Adrenal gland (tissue), 19 donors: ENCODE measurements at regions of chr6 and their contacts with region 1.

Region 1: DNA sequence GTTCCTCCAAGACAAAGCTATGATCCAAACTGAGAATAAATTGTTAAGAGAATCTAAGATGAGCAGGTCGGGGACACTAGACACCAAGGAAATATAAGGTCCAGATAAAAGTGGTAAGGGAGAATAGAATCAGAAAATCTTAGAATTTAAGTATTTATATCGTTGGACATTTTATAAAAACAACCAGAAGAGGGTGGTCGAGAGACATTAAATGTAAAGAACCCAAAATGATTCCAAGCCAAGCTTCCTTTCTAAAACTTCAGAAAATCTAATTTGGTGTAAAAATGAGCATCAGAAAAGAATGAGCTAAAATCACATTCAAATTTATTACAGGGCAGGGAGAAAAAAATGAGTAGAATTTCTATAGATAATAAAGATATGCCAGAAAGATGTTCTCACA is 97.8 kb upstream of the OGFRL1 start:
- DNase-seq: no peak
- H3K4me3 ChIP-seq: no peak overlapping the region
- H3K27ac ChIP-seq: no peak overlapping the region
- H3K4me1 ChIP-seq: no peaks in the 10 kb centered on the region
- H3K27me3 ChIP-seq: no peaks in the 10 kb centered on the region
- CTCF ChIP-seq: peak in 5 of 6 experiments; percentile 28 to 59 (median 47)
- POLR2A ChIP-seq: no peak

Region 2: DNA sequence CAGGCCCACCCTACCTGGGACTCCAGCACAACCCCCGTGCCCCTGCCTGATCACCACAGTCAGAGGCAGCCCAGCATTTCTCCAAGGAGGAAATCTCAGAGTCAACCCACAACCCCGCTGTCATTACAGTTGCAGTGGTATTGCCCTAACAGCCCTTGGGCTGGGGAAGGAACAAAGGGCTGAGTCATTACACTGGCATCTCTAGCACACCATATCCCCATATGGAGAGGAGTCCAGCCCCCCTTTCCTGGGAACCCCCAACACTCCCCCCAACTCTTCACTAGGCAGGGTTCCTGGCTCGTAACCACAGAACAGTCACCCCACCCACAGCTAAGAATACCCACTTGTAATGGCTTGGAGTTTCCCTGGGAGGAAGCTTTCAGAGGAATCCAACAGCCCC is 51.6 kb before region 1 on chr6:
- intact Hi-C with region 1: no loop called
- DNase-seq: no peak
- H3K4me3 ChIP-seq: no peak overlapping the region
- H3K27ac ChIP-seq: no peak overlapping the region
- H3K4me1 ChIP-seq: no peaks in the 10 kb centered on the region
- H3K27me3 ChIP-seq: no peaks in the 10 kb centered on the region
- CTCF ChIP-seq: no peak
- POLR2A ChIP-seq: no peak

Region 3: DNA sequence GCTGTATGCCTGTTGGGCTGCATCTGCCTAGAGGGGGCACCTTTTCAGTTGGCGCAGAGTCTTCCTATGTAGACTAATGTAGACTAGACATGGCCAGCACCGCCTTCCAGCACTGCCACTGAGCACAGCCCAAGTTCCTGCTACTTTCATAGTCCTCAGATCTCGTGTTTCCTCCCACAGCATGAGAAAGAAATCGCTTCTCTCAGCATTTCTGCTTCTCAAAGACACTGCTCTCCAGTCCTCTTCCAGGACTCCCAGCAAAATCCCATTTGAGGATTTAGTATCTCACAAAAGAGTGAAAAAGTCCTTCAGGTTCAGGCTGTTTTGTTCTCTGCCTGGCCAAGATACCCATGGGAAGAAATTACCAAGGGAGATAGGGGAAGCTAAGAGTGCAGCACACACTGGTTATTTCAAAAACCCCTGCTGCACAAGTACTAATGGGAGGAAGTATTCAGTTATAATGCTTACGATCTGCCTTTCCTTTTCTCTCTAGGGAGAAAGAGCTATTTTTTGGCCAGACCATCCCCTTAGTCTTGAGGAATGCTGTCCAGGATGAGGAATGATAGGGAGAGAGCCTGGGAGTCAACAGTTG is 133.5 kb after region 1 on chr6:
- intact Hi-C with region 1: no loop called
- DNase-seq: no peak
- H3K4me3 ChIP-seq: no peak overlapping the region
- H3K27ac ChIP-seq: no peak overlapping the region
- H3K4me1 ChIP-seq: no peaks in the 10 kb centered on the region
- H3K27me3 ChIP-seq: no peaks in the 10 kb centered on the region
- CTCF ChIP-seq: no peak
- POLR2A ChIP-seq: no peak

Region 4: GRCh38 chr6:71349395-71349794 is 158.6 kb after region 1 on chr6:
- intact Hi-C with region 1: loop called (anchors 5 to 10 kb)
- DNase-seq: no peak
- H3K4me3 ChIP-seq: no peak overlapping the region
- H3K27ac ChIP-seq: no peak overlapping the region
- H3K4me1 ChIP-seq: peaks cover 0 to 9% of the 10 kb centered on the region in 2 donors
- H3K27me3 ChIP-seq: no peaks in the 10 kb centered on the region
- CTCF ChIP-seq: peak; percentile 42 to 86 (median 68)
- POLR2A ChIP-seq: no peak